ENCODE measurements at regions of chr21 and their contacts with region 1.

Region 1: GRCh38 chr21:27371115-27371974 is 404.5 kb upstream of the ADAMTS5 start:
- DNase-seq: no peak
- H3K4me3 ChIP-seq: no peak overlapping the region
- H3K27ac ChIP-seq: no peak overlapping the region
- H3K4me1 ChIP-seq: peaks cover 10% of the 10 kb centered on the region
- H3K27me3 ChIP-seq: no peaks in the 10 kb centered on the region
- CTCF ChIP-seq: no peak
- EP300 ChIP-seq: no peak
- POLR2A ChIP-seq: no peak

Region 2: GRCh38 chr21:25573409-25574206 is 1797.7 kb before region 1 on chr21:
- intact Hi-C with region 1: no loop called
- DNase-seq: no peak
- H3K4me3 ChIP-seq: no peak overlapping the region
- H3K27ac ChIP-seq: no peak overlapping the region
- H3K4me1 ChIP-seq: no peaks in the 10 kb centered on the region
- H3K27me3 ChIP-seq: no peaks in the 10 kb centered on the region
- CTCF ChIP-seq: no peak
- EP300 ChIP-seq: no peak
- POLR2A ChIP-seq: no peak

Region 3: DNA sequence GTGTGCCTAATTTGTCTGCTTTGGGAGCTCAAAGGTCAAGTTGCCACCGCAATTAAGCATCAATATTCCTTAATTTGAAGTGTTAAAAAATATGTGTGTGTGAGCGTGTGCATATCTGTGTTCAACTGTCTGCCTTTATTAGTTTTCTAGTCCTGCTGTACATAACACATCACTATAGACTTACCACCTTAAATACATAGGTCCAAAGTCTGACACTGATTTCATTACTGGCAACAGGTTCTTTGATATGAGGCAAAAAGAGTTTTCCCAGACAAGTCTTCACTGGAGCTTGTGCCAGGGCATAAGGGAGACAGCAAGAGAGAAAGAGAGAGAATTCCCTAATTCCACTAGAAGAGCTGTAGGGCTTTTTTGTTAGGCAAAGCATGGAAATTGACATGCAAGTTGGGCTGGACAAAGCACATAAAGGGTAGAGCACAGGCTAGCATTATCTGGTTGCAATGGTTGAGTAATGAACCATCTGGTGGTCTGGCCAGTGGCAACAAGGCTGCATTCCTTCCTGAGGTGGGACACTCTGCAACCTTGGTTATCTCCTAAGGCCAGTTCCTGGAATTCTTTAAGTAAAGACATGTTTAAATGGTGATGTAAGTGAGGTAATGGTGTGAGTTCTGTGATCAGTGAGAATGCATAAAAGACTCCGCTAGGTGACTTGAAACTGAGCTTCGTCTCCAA is 52.7 kb after region 1 on chr21:
- intact Hi-C with region 1: loop called in 1 of 4 experiments (anchors 2 kb)
- DNase-seq: no peak
- H3K4me3 ChIP-seq: no peak overlapping the region
- H3K27ac ChIP-seq: no peak overlapping the region
- H3K4me1 ChIP-seq: peaks cover 15% of the 10 kb centered on the region
- H3K27me3 ChIP-seq: no peaks in the 10 kb centered on the region
- CTCF ChIP-seq: no peak
- EP300 ChIP-seq: no peak
- POLR2A ChIP-seq: no peak

Region 4: DNA sequence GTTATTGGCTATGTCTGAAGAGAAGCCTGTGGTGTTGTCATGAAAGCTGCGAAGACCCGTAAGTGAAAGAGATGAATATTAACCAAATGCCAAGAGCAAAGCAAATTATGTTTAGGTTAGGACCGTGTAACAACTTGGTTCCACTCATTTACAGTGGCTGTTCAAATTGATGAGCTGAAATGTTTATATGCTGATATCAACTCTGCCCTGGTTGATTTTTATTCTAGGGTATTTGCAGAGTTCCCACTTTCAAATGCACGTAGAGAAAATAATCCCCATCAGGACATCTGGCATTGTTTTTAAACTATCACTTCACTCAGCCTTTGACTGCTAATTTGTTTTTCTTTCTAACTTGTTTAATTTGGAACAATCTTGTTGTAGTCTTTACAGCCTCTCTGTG is 177.1 kb after region 1 on chr21:
- intact Hi-C with region 1: loop called in 1 of 4 experiments (anchors 10 kb)
- DNase-seq: no peak
- H3K4me3 ChIP-seq: no peak overlapping the region
- H3K27ac ChIP-seq: no peak overlapping the region
- H3K4me1 ChIP-seq: no peaks in the 10 kb centered on the region
- H3K27me3 ChIP-seq: no peaks in the 10 kb centered on the region
- CTCF ChIP-seq: no peak
- EP300 ChIP-seq: no peak
- POLR2A ChIP-seq: no peak

Measured in ovary (tissue), 10 donors.